ENCODE measurements at regions of chr2 and their contacts with region 1.

Region 1: DNA sequence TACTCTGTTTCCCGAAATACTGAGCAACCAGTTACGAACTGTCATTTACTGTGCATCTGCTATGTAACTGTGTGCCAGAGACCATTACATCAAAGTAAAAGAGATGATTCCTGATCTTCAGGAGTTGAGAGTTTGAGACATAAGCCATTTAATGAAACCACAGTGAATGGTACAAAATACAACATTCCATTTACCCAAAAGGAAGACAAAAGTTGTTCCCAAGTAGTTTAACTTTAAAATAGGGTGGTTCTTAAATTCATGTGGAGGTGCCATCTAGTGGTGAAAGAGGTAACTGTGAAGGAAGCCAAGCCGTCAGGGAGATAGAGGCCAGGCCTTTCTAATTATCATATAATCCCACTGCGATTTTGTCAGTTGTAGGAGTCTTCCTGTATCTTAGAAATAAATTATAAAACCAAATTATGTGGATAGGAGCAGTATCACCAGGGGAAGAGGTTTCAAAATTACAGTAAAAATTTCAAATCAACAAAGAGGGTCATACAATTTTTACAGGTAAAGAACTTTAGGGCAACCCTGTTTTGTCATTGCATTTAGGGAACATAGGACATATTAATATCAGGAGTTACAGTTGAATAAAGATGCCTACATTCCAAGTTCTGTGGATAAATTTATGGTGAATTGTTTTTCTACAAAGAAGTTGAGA is 67.7 kb downstream of the EPAS1 start:
- DNase-seq: peak in 1 of 6 donors; percentile 45
- ATAC-seq: peak; percentile 61 to 84 (median 82)
- H3K4me3 ChIP-seq: no peak overlapping the region
- H3K27ac ChIP-seq: no peak overlapping the region
- H3K4me1 ChIP-seq: peaks cover 0 to 4% (median 0%) of the 10 kb centered on the region in 3 donors
- H3K27me3 ChIP-seq: no peaks in the 10 kb centered on the region
- CTCF ChIP-seq: peak; percentile 63 to 81 (median 76)

Region 2: GRCh38 chr2:46062637-46063412 is 302.1 kb before region 1 on chr2:
- intact Hi-C with region 1: loop called in 1 of 3 experiments (anchors 10 kb)
- DNase-seq: peak in 5 of 6 donors; percentile 42 to 75 (median 69)
- ATAC-seq: peak; percentile 68 to 91 (median 87)
- H3K4me3 ChIP-seq: no peak overlapping the region
- H3K27ac ChIP-seq: no peak overlapping the region
- H3K4me1 ChIP-seq: peaks cover 0 to 3% (median 0%) of the 10 kb centered on the region in 3 donors
- H3K27me3 ChIP-seq: no peaks in the 10 kb centered on the region
- CTCF ChIP-seq: peak; percentile 52 to 82 (median 64)

Measured in pancreas (tissue), 10 donors.